Activated B cell treated with CpG ODN at 0.5 μM for 24 hours (primary cell): ENCODE measurements at regions of chr19 and their contacts with region 1.

Region 1: DNA sequence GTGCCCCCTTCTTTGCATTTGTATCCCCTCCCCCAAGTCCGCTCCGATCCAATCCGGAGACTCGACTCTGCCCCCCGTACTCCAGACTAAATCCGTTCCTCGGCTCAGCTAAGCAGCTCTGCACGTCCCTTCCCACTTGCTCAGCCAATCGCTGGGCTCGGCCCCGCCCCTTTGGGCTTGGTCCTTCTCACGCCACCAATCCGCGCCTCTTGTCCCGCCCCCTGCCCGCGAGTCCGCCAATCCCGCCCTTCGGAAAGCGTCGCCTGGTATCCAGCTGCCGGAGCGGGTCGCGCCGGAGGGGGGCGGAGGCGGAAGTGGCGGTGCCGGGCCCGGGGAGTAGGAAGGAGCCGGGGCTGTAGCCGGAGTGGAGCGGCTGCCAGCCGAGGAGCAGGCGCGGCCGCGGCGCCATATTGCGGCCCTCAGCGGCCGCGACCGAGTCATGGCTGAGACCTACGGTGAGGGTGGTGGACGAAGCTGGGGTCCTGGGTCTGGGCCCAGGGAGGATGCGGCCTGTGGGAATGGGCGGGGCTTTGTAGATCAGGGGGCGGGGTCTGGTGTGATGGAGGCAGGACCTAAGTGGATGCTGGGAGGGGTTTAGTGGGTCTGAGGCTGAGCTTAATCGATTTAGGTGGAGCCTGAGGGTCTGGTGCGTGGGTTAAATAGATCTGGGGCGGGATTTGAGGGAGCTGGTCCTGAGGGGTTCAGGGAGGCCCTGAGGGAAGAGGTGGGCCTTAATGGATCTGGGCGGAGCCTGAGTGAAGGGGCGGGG is at the start of gene RAB4B:
- DNase-seq: peak; percentile 100
- ATAC-seq: peak; percentile 74
- H3K4me3 Mint-ChIP-seq: peak within 1 kb of the TSS; percentile 98
- H3K27ac Mint-ChIP-seq: peak within 1 kb of the TSS; percentile 99
- H3K4me1 Mint-ChIP-seq: peaks cover 73% of the 10 kb centered on the region
- H3K27me3 Mint-ChIP-seq: no peaks in the 10 kb centered on the region
- CTCF ChIP-seq: no peak
- total RNA-seq, gene RAB4B: 90.6 and 98.1 TPM in 2 replicates

Region 2: GRCh38 chr19:40285353-40286234 is 492.5 kb before region 1 on chr19:
- CTCF ChIA-PET with region 1: no interaction called
- POLR2A ChIA-PET with region 1: interaction called, 8 read pairs
- intact Hi-C with region 1: loop called (anchors 10 kb)
- DNase-seq: peak; percentile 92
- ATAC-seq: peak; percentile 79
- H3K4me3 Mint-ChIP-seq: peak overlapping the region; percentile 82
- H3K27ac Mint-ChIP-seq: peak overlapping the region; percentile 96
- H3K4me1 Mint-ChIP-seq: peaks cover 56% of the 10 kb centered on the region
- H3K27me3 Mint-ChIP-seq: no peaks in the 10 kb centered on the region
- CTCF ChIP-seq: no peak

Region 3: DNA sequence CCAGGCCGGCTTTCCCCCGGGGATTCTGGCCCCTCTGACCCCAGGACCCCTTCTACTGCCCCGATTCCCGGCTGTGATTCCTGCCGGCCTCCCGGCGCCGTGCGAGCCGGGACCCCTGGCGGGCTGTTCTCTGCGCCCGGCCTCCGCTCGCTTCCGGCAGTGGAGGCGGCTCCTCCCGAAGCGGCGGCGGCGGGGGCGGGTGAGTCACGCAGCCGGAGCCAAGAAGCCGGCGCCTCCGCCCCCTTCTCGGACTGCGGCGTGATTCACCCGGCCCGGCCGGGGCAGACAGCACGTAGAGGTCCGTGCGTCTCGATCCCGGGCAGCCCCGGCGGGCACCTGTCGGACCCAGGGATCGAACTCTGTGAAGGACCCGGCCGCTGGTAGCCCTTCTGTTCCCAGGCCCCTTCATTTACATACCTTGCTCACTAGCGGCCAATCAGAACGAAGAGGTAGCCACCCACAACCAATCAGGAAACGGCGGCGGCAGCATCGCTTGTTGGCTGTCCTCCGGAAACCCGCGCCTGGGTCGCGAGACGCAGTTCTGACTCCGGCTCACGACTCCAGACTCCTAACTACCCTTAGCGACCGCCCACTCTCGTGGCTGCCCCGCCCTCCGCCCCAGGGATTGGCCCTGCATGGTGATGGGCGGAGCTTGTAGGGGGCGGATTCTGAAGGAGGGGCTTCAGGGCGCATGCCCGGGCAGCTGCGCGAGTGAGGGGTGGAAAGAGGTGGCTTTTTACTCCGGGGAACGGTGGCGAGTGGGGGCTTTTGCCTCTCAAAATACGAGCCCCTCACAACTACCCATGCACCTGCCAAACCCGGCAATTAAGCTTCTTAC is 352.5 kb before region 1 on chr19 and contains the start of gene SERTAD1:
- CTCF ChIA-PET with region 1: no interaction called
- POLR2A ChIA-PET with region 1: interaction called, 11 read pairs
- intact Hi-C with region 1: no loop called
- DNase-seq: peak; percentile 100
- ATAC-seq: peak; percentile 90
- H3K4me3 Mint-ChIP-seq: peak within 1 kb of the TSS; percentile 93
- H3K27ac Mint-ChIP-seq: peak within 1 kb of the TSS; percentile 93
- H3K4me1 Mint-ChIP-seq: peaks cover 31% of the 10 kb centered on the region
- H3K27me3 Mint-ChIP-seq: no peaks in the 10 kb centered on the region
- CTCF ChIP-seq: no peak
- total RNA-seq, gene SERTAD1: 13.4 and 13.9 TPM in 2 replicates

Region 4: DNA sequence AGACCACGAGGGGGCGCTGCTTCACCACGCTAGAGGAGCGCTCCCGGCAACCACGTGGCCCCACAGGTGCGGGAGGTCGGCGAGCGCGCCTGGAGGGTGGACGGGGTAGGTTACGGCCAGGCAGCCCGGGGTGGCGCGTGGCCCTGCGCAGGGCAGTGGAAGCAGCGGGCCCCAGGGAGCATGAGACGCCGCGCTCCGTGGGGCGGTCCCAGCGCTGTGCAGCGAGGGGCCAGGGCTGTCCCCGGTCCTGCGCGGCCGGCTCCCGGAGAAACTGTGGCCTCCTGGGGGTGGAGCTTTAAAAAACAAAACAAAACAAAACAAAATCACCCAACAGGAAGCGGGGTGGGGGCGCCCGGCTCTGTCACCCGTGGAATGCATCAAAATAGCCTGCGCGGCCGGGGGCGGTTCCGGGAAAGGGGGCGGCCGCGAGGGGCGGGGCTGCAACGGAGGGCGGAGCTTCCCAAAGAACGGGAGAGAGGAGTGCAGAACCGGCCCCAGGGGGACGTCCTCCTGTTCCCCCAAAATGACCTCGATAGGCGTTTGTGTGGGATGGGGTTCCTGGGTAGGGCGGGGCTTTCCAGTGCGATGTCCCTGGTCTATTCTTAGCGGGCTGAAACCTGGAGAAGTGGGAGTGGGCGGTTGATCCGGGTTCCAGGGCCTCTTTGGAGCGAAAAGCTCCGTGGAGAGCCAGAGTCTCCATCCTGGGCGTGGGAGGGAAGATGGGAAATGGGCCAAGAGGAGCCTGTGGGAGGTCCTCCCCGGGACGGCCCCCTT is 115.0 kb before region 1 on chr19:
- CTCF ChIA-PET with region 1: interaction called, 9 read pairs
- POLR2A ChIA-PET with region 1: interaction called, 51 read pairs
- intact Hi-C with region 1: loop called (anchors 1 kb)
- DNase-seq: peak; percentile 95
- ATAC-seq: peak; percentile 91
- H3K4me3 Mint-ChIP-seq: peak overlapping the region; percentile 85
- H3K27ac Mint-ChIP-seq: peak overlapping the region; percentile 76
- H3K4me1 Mint-ChIP-seq: peaks cover 17% of the 10 kb centered on the region
- H3K27me3 Mint-ChIP-seq: no peaks in the 10 kb centered on the region
- CTCF ChIP-seq: peak; percentile 68

Region 5: DNA sequence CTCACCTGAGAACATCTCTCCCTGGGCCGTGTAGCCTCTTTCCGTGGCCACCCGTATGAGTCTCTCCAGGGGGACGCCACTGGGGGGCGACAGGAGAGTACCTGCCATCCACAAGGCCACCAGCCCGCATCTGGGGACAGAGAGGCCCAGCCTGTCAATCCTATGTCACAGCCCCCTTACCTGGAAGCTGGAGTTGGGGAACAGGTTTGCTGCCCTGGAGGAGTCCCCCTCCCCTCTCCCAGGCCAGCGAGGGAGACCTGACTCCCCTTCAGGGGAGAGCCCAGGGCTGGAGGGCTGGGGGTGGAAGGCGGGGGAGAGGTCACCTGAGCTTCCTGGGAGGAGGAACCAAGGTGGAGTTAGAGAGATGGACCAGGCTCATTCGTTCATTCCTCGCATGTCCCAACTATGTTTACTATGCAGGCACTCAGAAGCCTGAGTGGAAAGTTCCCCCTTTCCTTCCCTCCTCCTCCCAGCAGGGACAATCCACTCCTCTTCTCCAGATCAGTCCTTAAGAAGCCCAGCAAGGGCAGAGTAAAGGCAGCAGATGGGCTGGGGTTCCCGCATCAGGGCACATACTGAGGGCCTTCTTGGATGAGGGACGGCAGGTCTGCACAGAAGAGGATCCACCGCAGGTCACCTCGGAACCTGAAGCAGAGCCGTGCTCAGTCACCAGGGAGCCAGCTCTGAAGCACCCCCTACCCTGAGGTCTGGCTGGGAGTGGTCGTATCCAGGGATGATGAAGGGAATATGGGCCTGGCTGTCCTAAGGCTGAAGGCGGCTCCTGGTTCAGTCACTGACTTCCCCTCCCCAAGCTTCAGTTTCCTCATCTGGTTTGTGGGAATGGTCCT is 33.3 kb before region 1 on chr19:
- CTCF ChIA-PET with region 1: no interaction called
- POLR2A ChIA-PET with region 1: interaction called, 351 read pairs
- intact Hi-C with region 1: no loop called
- DNase-seq: no peak
- ATAC-seq: peak; percentile 25
- H3K4me3 Mint-ChIP-seq: no peak overlapping the region
- H3K27ac Mint-ChIP-seq: no peak overlapping the region
- H3K4me1 Mint-ChIP-seq: peaks cover 16% of the 10 kb centered on the region
- H3K27me3 Mint-ChIP-seq: no peaks in the 10 kb centered on the region
- CTCF ChIP-seq: no peak

Region 6: GRCh38 chr19:40798223-40798996 is 20.3 kb after region 1 on chr19:
- CTCF ChIA-PET with region 1: interaction called, 18 read pairs
- POLR2A ChIA-PET with region 1: interaction called, 287 read pairs
- intact Hi-C with region 1: loop called (anchors 1 kb)
- DNase-seq: peak; percentile 57
- ATAC-seq: peak; percentile 38
- H3K4me3 Mint-ChIP-seq: peak overlapping the region; percentile 95
- H3K27ac Mint-ChIP-seq: peak overlapping the region; percentile 99
- H3K4me1 Mint-ChIP-seq: peaks cover 62% of the 10 kb centered on the region
- H3K27me3 Mint-ChIP-seq: no peaks in the 10 kb centered on the region
- CTCF ChIP-seq: no peak

Region 7: DNA sequence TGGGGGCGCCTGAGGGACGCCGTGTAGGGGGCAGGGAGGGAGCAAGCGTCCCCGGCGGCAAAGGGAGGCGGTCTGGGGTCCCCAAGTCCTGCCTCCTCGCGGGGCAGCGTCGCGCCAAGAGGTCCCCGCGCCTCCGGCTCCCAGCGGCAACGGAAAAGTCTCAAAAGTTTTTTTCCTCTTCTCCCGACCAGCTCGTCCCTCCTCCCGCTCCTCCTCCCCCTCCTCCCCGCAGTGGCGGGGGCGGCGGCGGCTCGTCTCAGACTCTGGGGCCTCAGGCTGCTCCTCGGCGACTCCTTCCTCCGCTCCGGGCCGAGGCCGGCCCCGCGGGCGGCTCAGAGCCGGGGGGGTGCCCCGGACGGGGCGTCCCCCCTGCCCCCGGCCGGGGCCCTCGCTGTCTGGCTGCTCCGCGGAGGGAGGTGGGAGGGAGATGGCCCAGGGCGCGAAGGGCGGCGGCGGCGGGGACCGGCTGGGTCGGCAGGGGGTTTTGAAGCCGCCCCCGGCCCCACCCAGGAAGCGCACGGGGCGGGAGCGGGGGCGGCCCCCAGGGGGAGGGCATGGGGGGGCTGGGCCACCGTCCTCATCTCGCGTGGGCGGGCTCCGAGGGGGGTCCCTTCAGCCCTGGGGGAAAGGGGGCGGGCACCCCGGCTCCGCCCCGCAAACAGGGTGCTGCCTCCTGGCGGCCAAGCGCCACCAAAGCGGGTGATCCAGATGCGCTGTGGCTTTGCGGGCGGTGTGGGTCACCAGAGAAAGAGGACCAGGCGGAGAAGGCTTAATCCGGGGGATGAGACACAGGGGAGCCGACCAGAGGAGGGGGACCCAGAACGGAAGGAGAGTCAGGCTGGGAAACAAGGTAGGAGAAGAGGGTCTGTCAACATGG is 575.6 kb after region 1 on chr19 and contains the start of gene TGFB1:
- CTCF ChIA-PET with region 1: no interaction called
- POLR2A ChIA-PET with region 1: interaction called, 13 read pairs
- intact Hi-C with region 1: no loop called
- DNase-seq: peak; percentile 92
- ATAC-seq: peak; percentile 70
- H3K4me3 Mint-ChIP-seq: peak within 1 kb of the TSS; percentile 100
- H3K27ac Mint-ChIP-seq: peak within 1 kb of the TSS; percentile 96
- H3K4me1 Mint-ChIP-seq: peaks cover 44% of the 10 kb centered on the region
- H3K27me3 Mint-ChIP-seq: no peaks in the 10 kb centered on the region
- CTCF ChIP-seq: peak; percentile 66
- total RNA-seq, gene TGFB1: 80.7 and 88.5 TPM in 2 replicates